IMR-90 (cell line): ENCODE measurements at regions of chr1 and their contacts with region 1.

Region 1: GRCh38 chr1:99728494-99729235 is 37.8 kb downstream of the FRRS1 start:
- DNase-seq: peak; percentile 28
- ATAC-seq: no peak
- H3K4me3 ChIP-seq: no peak overlapping the region
- H3K27ac ChIP-seq: no peak overlapping the region
- H3K4me1 ChIP-seq: peaks cover 5% of the 10 kb centered on the region; the same call in 1 of the 2 replicates
- H3K27me3 ChIP-seq: no peaks in the 10 kb centered on the region
- CTCF ChIP-seq: peak; percentile 58
- POLR2A ChIP-seq: no peak
- RAD21 ChIP-seq: no peak

Region 2: DNA sequence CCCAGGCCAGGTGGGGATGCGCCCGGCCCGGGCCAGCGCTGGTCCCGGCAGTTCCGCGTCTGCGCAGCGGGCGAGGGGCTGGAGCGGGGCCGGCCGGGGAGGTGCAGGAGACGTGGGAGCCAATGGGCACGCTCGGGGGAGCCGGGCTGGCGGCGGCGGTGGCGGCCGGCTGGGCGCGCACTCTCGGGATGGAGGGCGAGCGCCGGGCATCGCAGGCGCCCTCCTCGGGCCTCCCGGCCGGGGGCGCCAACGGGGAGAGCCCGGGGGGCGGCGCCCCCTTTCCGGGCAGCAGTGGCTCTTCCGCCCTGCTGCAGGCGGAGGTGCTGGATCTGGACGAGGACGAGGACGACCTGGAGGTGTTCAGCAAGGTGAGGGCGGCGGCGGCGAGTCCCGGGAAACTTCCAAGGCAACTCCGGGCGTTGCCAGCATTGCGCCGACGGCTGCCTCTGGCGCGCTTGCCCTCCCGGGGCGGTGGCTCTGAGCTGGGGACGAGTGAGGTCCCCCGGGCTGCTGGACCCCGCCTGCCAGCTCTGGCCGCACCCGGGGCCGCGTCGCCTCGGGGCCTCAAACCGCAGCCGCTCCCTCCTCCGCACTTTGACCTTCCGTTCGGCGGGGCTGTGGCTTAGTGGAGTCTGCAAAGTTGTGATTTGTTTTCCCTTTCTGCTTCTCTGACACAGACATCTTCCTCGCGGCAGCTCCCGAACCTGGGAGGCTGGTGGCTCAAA is 1067.0 kb before region 1 on chr1 and contains the start of gene SNX7:
- CTCF ChIA-PET with region 1: no interaction called
- POLR2A ChIA-PET with region 1: no interaction called
- dilution Hi-C with region 1: no loop called
- in situ Hi-C with region 1: no loop called
- intact Hi-C with region 1: loop called (anchors 10 kb)
- DNase-seq: peak; percentile 69
- ATAC-seq: peak; percentile 99
- H3K4me3 ChIP-seq: peak within 1 kb of the TSS; percentile 97
- H3K27ac ChIP-seq: peak within 1 kb of the TSS; percentile 79
- H3K4me1 ChIP-seq: peaks cover 3% of the 10 kb centered on the region
- H3K27me3 ChIP-seq: no peaks in the 10 kb centered on the region
- CTCF ChIP-seq: peak; percentile 35
- POLR2A ChIP-seq: peak; percentile 34; the same call in 1 of the 2 replicates
- RAD21 ChIP-seq: 0 out of 2 replicates have a peak, but pooled peaks have one; percentile 0
- total RNA-seq, gene SNX7: 24.4 and 46.1 TPM in 2 replicates

Region 3: DNA sequence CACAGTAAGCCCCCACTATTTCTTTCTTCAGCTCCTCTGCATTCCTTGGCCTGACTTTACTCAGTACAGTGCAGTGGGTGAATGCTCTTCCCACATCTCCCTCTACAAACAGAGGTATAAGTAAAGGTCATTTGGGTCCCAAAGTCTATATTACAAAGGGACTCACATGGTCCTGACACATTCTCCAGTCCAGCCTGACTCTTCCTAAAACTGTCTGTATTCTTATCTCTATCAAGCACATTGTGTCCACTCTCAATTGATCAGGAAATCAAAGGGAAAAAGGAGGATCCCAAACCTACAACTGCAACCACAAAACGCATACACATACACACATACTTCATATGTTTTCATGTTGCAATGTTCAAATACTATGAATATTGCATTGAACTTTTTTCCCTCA is 11.7 kb before region 1 on chr1:
- CTCF ChIA-PET with region 1: no interaction called
- POLR2A ChIA-PET with region 1: no interaction called
- dilution Hi-C with region 1: no loop called
- in situ Hi-C with region 1: no loop called
- intact Hi-C with region 1: loop called (anchors 1 kb)
- DNase-seq: no peak
- ATAC-seq: no peak
- H3K4me3 ChIP-seq: no peak overlapping the region
- H3K27ac ChIP-seq: no peak overlapping the region
- H3K4me1 ChIP-seq: no peaks in the 10 kb centered on the region
- H3K27me3 ChIP-seq: no peaks in the 10 kb centered on the region
- CTCF ChIP-seq: no peak
- POLR2A ChIP-seq: no peak
- RAD21 ChIP-seq: no peak

Region 4: DNA sequence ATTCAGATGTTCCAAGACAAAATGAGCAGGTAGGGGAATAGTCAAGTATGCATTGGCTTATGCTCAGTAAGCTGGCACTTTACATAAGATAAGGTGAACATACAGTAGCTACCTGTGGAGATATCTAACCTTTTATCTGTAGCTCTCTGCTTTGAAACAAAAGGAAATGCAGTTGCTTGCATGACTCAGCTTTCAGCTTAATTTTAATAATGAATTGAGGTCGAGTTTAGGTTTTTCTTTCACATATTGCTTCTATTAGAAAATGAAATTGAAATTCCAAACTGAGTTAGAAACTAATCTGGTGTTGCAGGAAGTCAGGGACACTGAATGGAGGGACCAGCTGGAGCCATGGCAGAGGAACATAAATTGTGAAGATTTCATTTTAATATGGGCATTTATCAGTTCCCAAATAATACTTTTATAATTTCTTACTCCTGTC is 29.4 kb after region 1 on chr1:
- CTCF ChIA-PET with region 1: no interaction called
- POLR2A ChIA-PET with region 1: no interaction called
- dilution Hi-C with region 1: no loop called
- in situ Hi-C with region 1: no loop called
- intact Hi-C with region 1: no loop called
- DNase-seq: no peak
- ATAC-seq: no peak
- H3K4me3 ChIP-seq: no peak overlapping the region
- H3K27ac ChIP-seq: no peak overlapping the region
- H3K4me1 ChIP-seq: no peaks in the 10 kb centered on the region
- H3K27me3 ChIP-seq: no peaks in the 10 kb centered on the region
- CTCF ChIP-seq: no peak
- POLR2A ChIP-seq: no peak
- RAD21 ChIP-seq: no peak

Region 5: GRCh38 chr1:100606438-100606837 is 877.8 kb after region 1 on chr1:
- CTCF ChIA-PET with region 1: no interaction called
- POLR2A ChIA-PET with region 1: no interaction called
- dilution Hi-C with region 1: no loop called
- in situ Hi-C with region 1: no loop called
- intact Hi-C with region 1: no loop called
- DNase-seq: peak; percentile 74
- ATAC-seq: peak; percentile 91
- H3K4me3 ChIP-seq: no peak overlapping the region
- H3K27ac ChIP-seq: no peak overlapping the region
- H3K4me1 ChIP-seq: peaks cover 4% of the 10 kb centered on the region; the same call in 1 of the 2 replicates
- H3K27me3 ChIP-seq: no peaks in the 10 kb centered on the region
- CTCF ChIP-seq: peak; percentile 81
- POLR2A ChIP-seq: peak; percentile 34; the same call in 1 of the 2 replicates
- RAD21 ChIP-seq: peak; percentile 89